ENCODE measurements at regions of chr15 and their contacts with region 1.

Region 1: GRCh38 chr15:66946578-66947164 is 118.7 kb upstream of the SMAD3 start:
- DNase-seq: peak; percentile 50 to 78 (median 68)
- ATAC-seq: peak; percentile 86
- H3K4me3 ChIP-seq: no peak overlapping the region
- H3K4me3 Mint-ChIP-seq: peak overlapping the region in 2 of 10 donors; percentile 17
- H3K27ac ChIP-seq: no peak overlapping the region
- H3K27ac Mint-ChIP-seq: no peak overlapping the region
- H3K4me1 ChIP-seq: no peaks in the 10 kb centered on the region
- H3K4me1 Mint-ChIP-seq: peaks cover 0 to 26% (median 4%) of the 10 kb centered on the region in 7 donors
- H3K27me3 ChIP-seq: no peaks in the 10 kb centered on the region
- H3K27me3 Mint-ChIP-seq: peaks cover 0 to 9% (median 0%) of the 10 kb centered on the region in 5 donors

Region 2: DNA sequence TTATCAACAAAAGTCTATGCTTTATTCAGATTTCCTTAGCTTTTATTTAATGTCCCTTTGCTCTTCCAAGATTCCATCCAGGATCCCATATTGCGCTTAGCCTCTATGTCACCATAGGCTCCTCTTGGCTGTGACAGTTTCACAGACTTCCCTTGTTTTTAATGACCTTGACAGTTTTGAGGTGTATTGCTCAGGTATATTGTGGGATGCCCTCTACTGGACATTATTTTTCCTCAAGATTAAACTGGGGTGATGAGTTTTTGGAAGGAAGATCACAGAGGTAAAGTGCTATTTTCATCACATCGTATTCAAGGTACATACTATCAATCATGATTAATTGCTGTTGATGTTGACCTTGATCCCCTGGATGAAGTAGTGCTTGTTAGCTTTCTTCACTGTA is 19.6 kb after region 1 on chr15:
- CTCF ChIA-PET with region 1: interaction called, 11 read pairs
- POLR2A ChIA-PET with region 1: no interaction called
- intact Hi-C with region 1: no loop called
- DNase-seq: peak in 5 of 9 donors; percentile 8 to 29 (median 12)
- ATAC-seq: no peak
- H3K4me3 ChIP-seq: no peak overlapping the region
- H3K4me3 Mint-ChIP-seq: no peak overlapping the region
- H3K27ac ChIP-seq: no peak overlapping the region
- H3K27ac Mint-ChIP-seq: no peak overlapping the region
- H3K4me1 ChIP-seq: no peaks in the 10 kb centered on the region
- H3K4me1 Mint-ChIP-seq: no peaks in the 10 kb centered on the region
- H3K27me3 ChIP-seq: no peaks in the 10 kb centered on the region
- H3K27me3 Mint-ChIP-seq: peaks cover 0 to 18% (median 0%) of the 10 kb centered on the region in 5 donors

Region 3: DNA sequence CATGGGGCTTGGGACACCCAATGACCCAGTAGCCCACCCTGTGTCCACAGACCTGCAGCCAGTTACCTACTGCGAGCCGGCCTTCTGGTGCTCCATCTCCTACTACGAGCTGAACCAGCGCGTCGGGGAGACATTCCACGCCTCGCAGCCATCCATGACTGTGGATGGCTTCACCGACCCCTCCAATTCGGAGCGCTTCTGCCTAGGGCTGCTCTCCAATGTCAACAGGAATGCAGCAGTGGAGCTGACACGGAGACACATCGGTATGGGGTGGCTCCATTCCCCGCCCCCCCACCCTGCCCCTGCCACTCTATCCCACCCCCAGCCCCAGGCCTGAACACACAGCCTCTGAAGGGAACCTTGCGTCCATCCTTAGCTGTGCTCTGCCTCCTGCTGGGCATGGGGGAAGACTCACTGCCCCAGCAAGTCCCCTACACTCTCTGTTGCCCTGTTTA is 234.5 kb after region 1 on chr15:
- CTCF ChIA-PET with region 1: no interaction called
- POLR2A ChIA-PET with region 1: no interaction called
- intact Hi-C with region 1: loop called (anchors 1 to 2 kb)
- DNase-seq: peak in 4 of 9 donors; percentile 7 to 17 (median 11)
- ATAC-seq: no peak
- H3K4me3 ChIP-seq: no peak overlapping the region
- H3K4me3 Mint-ChIP-seq: no peak overlapping the region
- H3K27ac ChIP-seq: no peak overlapping the region
- H3K27ac Mint-ChIP-seq: no peak overlapping the region
- H3K4me1 ChIP-seq: no peaks in the 10 kb centered on the region
- H3K4me1 Mint-ChIP-seq: peaks cover 0 to 23% (median 8%) of the 10 kb centered on the region in 7 donors
- H3K27me3 ChIP-seq: no peaks in the 10 kb centered on the region
- H3K27me3 Mint-ChIP-seq: no peaks in the 10 kb centered on the region

Region 4: GRCh38 chr15:67240235-67241131 is 293.8 kb after region 1 on chr15:
- CTCF ChIA-PET with region 1: interaction called, 11 read pairs
- POLR2A ChIA-PET with region 1: no interaction called
- intact Hi-C with region 1: loop called in 1 of 2 experiments (anchors 1 kb)
- DNase-seq: peak in 3 of 9 donors; percentile 9 to 30 (median 12)
- ATAC-seq: peak; percentile 70
- H3K4me3 ChIP-seq: peak overlapping the region; percentile 23
- H3K4me3 Mint-ChIP-seq: peak overlapping the region in 9 of 10 donors; percentile 18 to 71 (median 45)
- H3K27ac ChIP-seq: no peak overlapping the region
- H3K27ac Mint-ChIP-seq: peak overlapping the region in 8 of 9 donors; percentile 46 to 88 (median 70)
- H3K4me1 ChIP-seq: peaks cover 16 to 34% of the 10 kb centered on the region in 2 donors
- H3K4me1 Mint-ChIP-seq: peaks cover 34 to 67% (median 56%) of the 10 kb centered on the region in 7 donors
- H3K27me3 ChIP-seq: no peaks in the 10 kb centered on the region
- H3K27me3 Mint-ChIP-seq: no peaks in the 10 kb centered on the region

Region 5: GRCh38 chr15:67433495-67434099 is 486.9 kb after region 1 on chr15:
- CTCF ChIA-PET with region 1: interaction called, 9 read pairs
- POLR2A ChIA-PET with region 1: no interaction called
- intact Hi-C with region 1: loop called in 1 of 2 experiments (anchors 1 kb)
- DNase-seq: peak in 2 of 9 donors; percentile 5 to 6
- ATAC-seq: peak; percentile 55
- H3K4me3 ChIP-seq: no peak overlapping the region
- H3K4me3 Mint-ChIP-seq: no peak overlapping the region
- H3K27ac ChIP-seq: no peak overlapping the region
- H3K27ac Mint-ChIP-seq: no peak overlapping the region
- H3K4me1 ChIP-seq: no peaks in the 10 kb centered on the region
- H3K4me1 Mint-ChIP-seq: no peaks in the 10 kb centered on the region
- H3K27me3 ChIP-seq: no peaks in the 10 kb centered on the region
- H3K27me3 Mint-ChIP-seq: peaks cover 0 to 3% (median 0%) of the 10 kb centered on the region in 5 donors